ENCODE measurements at regions of chr18 and their contacts with region 1.

Region 1: GRCh38 chr18:32158108-32158624 is 31.7 kb upstream of the MEP1B start:
- DNase-seq: peak; percentile 89
- H3K4me3 ChIP-seq: peak overlapping the region; percentile 9
- H3K27ac ChIP-seq: peak overlapping the region; percentile 41
- H3K4me1 ChIP-seq: no peaks in the 10 kb centered on the region
- H3K27me3 ChIP-seq: no peaks in the 10 kb centered on the region
- CTCF ChIP-seq: peak; percentile 78

Region 2: DNA sequence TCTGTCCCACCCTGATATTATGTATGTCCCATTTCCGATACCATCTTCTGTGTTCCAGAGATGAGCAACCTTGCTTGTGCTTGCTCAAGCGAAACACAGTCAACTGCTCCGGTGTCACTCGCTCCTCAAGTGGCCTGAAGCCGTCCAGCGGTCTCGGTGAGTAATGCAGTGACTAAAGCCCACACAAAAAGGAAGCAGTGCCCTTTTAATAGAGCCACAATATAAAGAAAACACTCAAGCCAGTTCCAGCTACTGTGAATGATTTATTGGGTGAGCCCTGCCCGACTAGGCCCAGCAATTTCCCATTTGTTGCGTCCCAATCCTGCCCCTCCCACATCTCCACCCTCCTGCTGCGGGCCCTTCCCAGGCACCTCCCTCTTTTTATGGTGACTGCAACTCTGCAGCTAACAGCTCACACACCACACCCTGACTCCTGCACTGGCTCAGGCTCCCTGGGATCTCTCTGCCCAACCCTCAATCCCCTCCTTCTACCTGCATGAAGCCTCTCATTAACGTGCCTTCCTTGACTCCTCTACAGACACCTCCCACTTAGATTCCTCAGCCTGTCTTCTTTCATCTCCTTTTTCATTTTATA is 951.3 kb before region 1 on chr18:
- intact Hi-C with region 1: no loop called
- DNase-seq: peak; percentile 94
- H3K4me3 ChIP-seq: no peak overlapping the region
- H3K27ac ChIP-seq: peak overlapping the region; percentile 84
- H3K4me1 ChIP-seq: peaks cover 4% of the 10 kb centered on the region
- H3K27me3 ChIP-seq: no peaks in the 10 kb centered on the region
- CTCF ChIP-seq: peak; percentile 32

Region 3: DNA sequence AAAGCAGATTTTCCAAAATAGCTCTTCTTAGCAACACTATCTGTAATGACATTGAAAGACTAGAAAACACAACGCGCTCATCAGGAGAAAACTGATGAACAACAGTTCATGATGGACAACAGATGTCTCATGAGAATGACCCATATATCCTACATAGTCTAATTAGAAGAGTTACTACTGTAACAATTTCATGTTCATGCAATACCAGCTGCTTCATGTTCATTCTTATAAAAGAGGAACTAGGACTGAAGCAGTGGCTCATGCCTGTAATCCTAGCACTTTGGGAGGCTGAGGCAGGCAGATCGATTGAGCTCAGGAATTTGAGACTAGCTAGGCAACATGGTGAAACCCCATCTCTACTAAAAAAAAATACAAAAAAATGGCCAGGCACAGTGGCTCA is 237.9 kb before region 1 on chr18:
- intact Hi-C with region 1: no loop called
- DNase-seq: no peak
- H3K4me3 ChIP-seq: no peak overlapping the region
- H3K27ac ChIP-seq: no peak overlapping the region
- H3K4me1 ChIP-seq: no peaks in the 10 kb centered on the region
- H3K27me3 ChIP-seq: no peaks in the 10 kb centered on the region
- CTCF ChIP-seq: no peak

Region 4: DNA sequence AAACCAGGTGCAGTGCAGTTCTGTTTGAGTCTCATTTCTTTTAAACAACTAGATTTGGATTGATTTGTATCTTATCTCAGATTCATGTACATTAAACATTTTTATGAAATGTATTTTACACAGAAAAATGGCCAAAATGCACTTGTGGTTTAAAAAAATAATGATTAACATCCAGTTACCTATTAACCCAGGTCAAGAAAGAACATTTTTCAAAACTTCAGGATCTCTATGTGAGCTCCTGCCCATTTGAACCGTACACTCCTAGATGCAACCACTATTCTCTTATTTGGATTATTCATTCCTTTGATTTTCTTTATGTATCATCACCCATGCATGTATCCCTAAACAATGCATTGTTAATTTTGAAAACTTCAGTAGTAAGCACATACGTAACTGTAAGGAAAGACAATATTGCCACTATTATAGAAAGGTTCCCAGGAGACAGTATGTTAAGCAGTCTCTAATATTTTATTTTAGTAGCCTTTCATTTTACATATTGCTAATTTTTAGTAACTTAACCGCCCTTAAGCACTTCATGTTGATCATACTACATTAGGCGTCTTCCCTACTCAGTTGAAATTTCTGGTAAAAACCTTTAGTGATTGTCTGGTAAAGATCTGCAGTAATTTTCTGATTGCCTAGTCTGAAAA is 43.7 kb before region 1 on chr18:
- intact Hi-C with region 1: no loop called
- DNase-seq: no peak
- H3K4me3 ChIP-seq: no peak overlapping the region
- H3K27ac ChIP-seq: no peak overlapping the region
- H3K4me1 ChIP-seq: no peaks in the 10 kb centered on the region
- H3K27me3 ChIP-seq: no peaks in the 10 kb centered on the region
- CTCF ChIP-seq: no peak

Region 5: DNA sequence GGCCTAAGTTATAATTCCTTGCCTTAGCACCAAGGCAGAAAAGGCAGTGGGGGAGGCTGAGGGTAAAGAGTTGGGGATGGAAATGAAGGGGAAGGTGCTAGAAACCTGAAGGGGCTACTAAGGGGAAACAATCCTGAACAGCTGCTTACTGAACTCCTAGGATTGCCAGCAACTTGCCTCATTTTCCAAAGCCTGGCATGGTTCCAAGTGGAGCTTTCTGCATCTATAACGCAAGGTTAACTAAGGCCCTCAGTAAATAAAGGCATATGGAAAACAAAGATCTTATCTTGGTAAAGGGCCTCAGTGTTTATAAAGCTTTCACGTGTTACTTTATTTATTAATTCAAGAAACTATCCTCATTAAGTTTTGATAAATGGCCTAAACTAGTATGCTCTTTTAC is 42.6 kb after region 1 on chr18:
- intact Hi-C with region 1: no loop called
- DNase-seq: peak; percentile 67
- H3K4me3 ChIP-seq: no peak overlapping the region
- H3K27ac ChIP-seq: no peak overlapping the region
- H3K4me1 ChIP-seq: no peaks in the 10 kb centered on the region
- H3K27me3 ChIP-seq: no peaks in the 10 kb centered on the region
- CTCF ChIP-seq: no peak

Region 6: GRCh38 chr18:32271672-32272208 is 113.6 kb after region 1 on chr18:
- intact Hi-C with region 1: loop called (anchors 5 kb)
- DNase-seq: no peak
- H3K4me3 ChIP-seq: no peak overlapping the region
- H3K27ac ChIP-seq: no peak overlapping the region
- H3K4me1 ChIP-seq: no peaks in the 10 kb centered on the region
- H3K27me3 ChIP-seq: no peaks in the 10 kb centered on the region
- CTCF ChIP-seq: peak; percentile 51

Region 7: GRCh38 chr18:32470713-32471633 is 312.8 kb after region 1 on chr18 and contains the start of gene GAREM1:
- intact Hi-C with region 1: loop called (anchors 5 kb)
- DNase-seq: peak; percentile 95
- H3K4me3 ChIP-seq: peak within 1 kb of the TSS; percentile 57
- H3K27ac ChIP-seq: peak within 1 kb of the TSS; percentile 60
- H3K4me1 ChIP-seq: no peaks in the 10 kb centered on the region
- H3K27me3 ChIP-seq: no peaks in the 10 kb centered on the region
- CTCF ChIP-seq: peak; percentile 38
- total RNA-seq, gene GAREM1: 15.3 to 20.1 TPM

Region 8: GRCh38 chr18:32552421-32553030 is 394.4 kb after region 1 on chr18:
- intact Hi-C with region 1: loop called (anchors 2 kb)
- DNase-seq: peak; percentile 82
- H3K4me3 ChIP-seq: no peak overlapping the region
- H3K27ac ChIP-seq: no peak overlapping the region
- H3K4me1 ChIP-seq: no peaks in the 10 kb centered on the region
- H3K27me3 ChIP-seq: no peaks in the 10 kb centered on the region
- CTCF ChIP-seq: peak; percentile 77